ENCODE measurements at regions of chr11 and their contacts with region 1.

Region 1: GRCh38 chr11:124953753-124954589 is at the start of gene CCDC15:
- DNase-seq: peak; percentile 84 to 98 (median 95)
- ATAC-seq: peak; percentile 97
- H3K4me3 ChIP-seq: peak within 1 kb of the TSS; percentile 58 to 86
- H3K4me3 Mint-ChIP-seq: no peak within 1 kb of the TSS
- H3K27ac ChIP-seq: peak within 1 kb of the TSS; percentile 76 to 93
- H3K27ac Mint-ChIP-seq: no peak within 1 kb of the TSS
- H3K4me1 ChIP-seq: peaks cover 50% of the 10 kb centered on the region
- H3K4me1 Mint-ChIP-seq: peaks cover 2% of the 10 kb centered on the region
- H3K27me3 ChIP-seq: no peaks in the 10 kb centered on the region
- H3K27me3 Mint-ChIP-seq: no peaks in the 10 kb centered on the region
- CTCF ChIP-seq: no peak
- total RNA-seq, gene CCDC15: 0.56 to 0.57 TPM

Region 2: GRCh38 chr11:124739479-124740276 is 214.3 kb before region 1 on chr11 and contains the start of gene NRGN:
- CTCF ChIA-PET with region 1: no interaction called
- POLR2A ChIA-PET with region 1: no interaction called
- intact Hi-C with region 1: loop called in 1 of 2 experiments (anchors 10 kb)
- DNase-seq: peak; percentile 53 to 89 (median 84)
- ATAC-seq: peak; percentile 95
- H3K4me3 ChIP-seq: peak within 1 kb of the TSS; percentile 65 to 73
- H3K4me3 Mint-ChIP-seq: peak within 1 kb of the TSS; percentile 83
- H3K27ac ChIP-seq: no peak within 1 kb of the TSS
- H3K27ac Mint-ChIP-seq: no peak within 1 kb of the TSS
- H3K4me1 ChIP-seq: peaks cover 16% of the 10 kb centered on the region
- H3K4me1 Mint-ChIP-seq: peaks cover 20% of the 10 kb centered on the region
- H3K27me3 ChIP-seq: peaks cover 0 to 11% of the 10 kb centered on the region in 2 experiments
- H3K27me3 Mint-ChIP-seq: peaks cover 5% of the 10 kb centered on the region
- CTCF ChIP-seq: no peak
- total RNA-seq, gene NRGN: 0.31 to 0.41 TPM

Region 3: GRCh38 chr11:124875943-124876817 is 77.8 kb before region 1 on chr11:
- CTCF ChIA-PET with region 1: interaction called, 22 read pairs
- POLR2A ChIA-PET with region 1: interaction called, 26 read pairs
- intact Hi-C with region 1: loop called (anchors 1 to 2 kb)
- DNase-seq: peak; percentile 60 to 90 (median 76)
- ATAC-seq: peak; percentile 91
- H3K4me3 ChIP-seq: peak overlapping the region; percentile 75 to 88
- H3K4me3 Mint-ChIP-seq: peak overlapping the region; percentile 93
- H3K27ac ChIP-seq: peak overlapping the region; percentile 77 to 96
- H3K27ac Mint-ChIP-seq: peak overlapping the region; percentile 92
- H3K4me1 ChIP-seq: peaks cover 16% of the 10 kb centered on the region
- H3K4me1 Mint-ChIP-seq: peaks cover 24% of the 10 kb centered on the region
- H3K27me3 ChIP-seq: no peaks in the 10 kb centered on the region
- H3K27me3 Mint-ChIP-seq: peaks cover 27% of the 10 kb centered on the region
- CTCF ChIP-seq: peak; percentile 65

Region 4: GRCh38 chr11:125568970-125569914 is 615.3 kb after region 1 on chr11 and contains the start of gene EI24:
- CTCF ChIA-PET with region 1: no interaction called
- POLR2A ChIA-PET with region 1: no interaction called
- intact Hi-C with region 1: loop called (anchors 2 to 5 kb)
- DNase-seq: peak; percentile 71 to 95 (median 86)
- ATAC-seq: peak; percentile 95
- H3K4me3 ChIP-seq: peak within 1 kb of the TSS; percentile 81 to 92
- H3K4me3 Mint-ChIP-seq: peak within 1 kb of the TSS; percentile 93
- H3K27ac ChIP-seq: peak within 1 kb of the TSS; percentile 80 to 82
- H3K27ac Mint-ChIP-seq: peak within 1 kb of the TSS; percentile 95
- H3K4me1 ChIP-seq: peaks cover 16% of the 10 kb centered on the region
- H3K4me1 Mint-ChIP-seq: peaks cover 37% of the 10 kb centered on the region
- H3K27me3 ChIP-seq: no peaks in the 10 kb centered on the region
- H3K27me3 Mint-ChIP-seq: no peaks in the 10 kb centered on the region
- CTCF ChIP-seq: peak; percentile 60
- total RNA-seq, gene EI24: 20.5 to 22.4 TPM

Region 5: GRCh38 chr11:126211235-126212088 is 1257.5 kb after region 1 on chr11 and contains the starts of genes FAM118B and RPUSD4:
- CTCF ChIA-PET with region 1: no interaction called
- POLR2A ChIA-PET with region 1: no interaction called
- intact Hi-C with region 1: loop called (anchors 10 kb)
- DNase-seq: peak; percentile 98 to 99 (median 98)
- ATAC-seq: peak; percentile 95
- H3K4me3 ChIP-seq: peak within 1 kb of the TSS; percentile 95 to 98
- H3K4me3 Mint-ChIP-seq: peak within 1 kb of the TSS; percentile 99
- H3K27ac ChIP-seq: peak within 1 kb of the TSS; percentile 71 to 80
- H3K27ac Mint-ChIP-seq: peak within 1 kb of the TSS; percentile 95
- H3K4me1 ChIP-seq: peaks cover 18% of the 10 kb centered on the region
- H3K4me1 Mint-ChIP-seq: peaks cover 40% of the 10 kb centered on the region
- H3K27me3 ChIP-seq: no peaks in the 10 kb centered on the region
- H3K27me3 Mint-ChIP-seq: no peaks in the 10 kb centered on the region
- CTCF ChIP-seq: no peak
- total RNA-seq, gene FAM118B: 0.64 to 0.79 TPM
- total RNA-seq, gene RPUSD4: 42.3 to 43.8 TPM